SK-N-SH (cell line): ENCODE measurements at regions of chr1 and their contacts with region 1.

Region 1: DNA sequence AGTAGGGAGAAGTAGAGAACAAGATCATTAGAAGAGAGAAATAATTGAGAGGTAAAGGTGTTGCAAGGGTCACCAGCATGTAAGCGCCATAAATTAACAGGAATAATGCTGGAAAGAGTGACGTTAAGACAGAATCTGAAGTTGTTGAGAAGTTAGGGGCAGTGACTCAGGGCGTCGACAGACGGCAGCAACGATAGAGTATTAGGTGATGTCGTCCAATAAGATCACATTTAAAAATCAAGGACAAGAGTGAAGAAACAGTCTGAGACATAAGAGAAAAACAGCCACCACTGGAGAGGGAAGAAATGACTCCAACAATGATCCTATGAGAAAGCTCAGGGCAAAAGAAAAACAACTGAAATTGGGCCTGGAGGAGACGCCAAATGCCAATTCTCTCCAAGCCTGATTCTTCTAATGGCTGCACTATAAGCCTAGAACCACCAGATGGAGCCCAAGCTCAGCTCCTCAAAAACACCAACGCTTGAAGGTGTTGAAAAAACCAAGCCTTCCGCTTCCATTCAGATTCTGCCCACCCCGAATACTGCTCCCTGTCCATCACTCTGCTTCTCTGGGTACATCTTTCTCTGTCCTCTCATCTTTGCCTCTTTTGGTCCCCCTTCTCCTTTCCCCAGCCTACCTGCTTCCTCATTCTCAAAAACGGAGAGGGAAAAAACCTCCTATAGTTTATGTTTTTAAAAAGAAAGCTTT is 70.0 kb downstream of the LUZP1 start:
- DNase-seq: peak; percentile 63
- H3K4me3 ChIP-seq: peak overlapping the region in 1 of 2 experiments; percentile 25; a peak in 1 of 4 replicates
- H3K27ac ChIP-seq: peak overlapping the region in 1 of 2 experiments; percentile 82; a peak in 2 of 4 replicates
- H3K4me1 ChIP-seq: peaks cover 9 to 46% of the 10 kb centered on the region in 2 experiments
- H3K27me3 ChIP-seq: no peaks in the 10 kb centered on the region
- CTCF ChIP-seq: peak; percentile 91
- EP300 ChIP-seq: no peak
- RAD21 ChIP-seq: peak; percentile 97

Region 2: GRCh38 chr1:22976461-22977243 is 122.0 kb before region 1 on chr1:
- CTCF ChIA-PET with region 1: interaction called, 16 read pairs
- POLR2A ChIA-PET with region 1: no interaction called
- DNase-seq: peak; percentile 82
- H3K4me3 ChIP-seq: no peak overlapping the region
- H3K27ac ChIP-seq: no peak overlapping the region
- H3K4me1 ChIP-seq: peaks cover 3 to 13% of the 10 kb centered on the region in 2 experiments; a peak in 2 of 4 replicates
- H3K27me3 ChIP-seq: no peaks in the 10 kb centered on the region
- CTCF ChIP-seq: peak; percentile 88
- EP300 ChIP-seq: no peak
- RAD21 ChIP-seq: peak; percentile 91

Region 3: GRCh38 chr1:23088027-23088426 is 10.6 kb before region 1 on chr1:
- CTCF ChIA-PET with region 1: interaction called, 31 read pairs
- POLR2A ChIA-PET with region 1: no interaction called
- DNase-seq: no peak
- H3K4me3 ChIP-seq: no peak overlapping the region
- H3K27ac ChIP-seq: no peak overlapping the region
- H3K4me1 ChIP-seq: no peaks in the 10 kb centered on the region
- H3K27me3 ChIP-seq: no peaks in the 10 kb centered on the region
- CTCF ChIP-seq: no peak
- EP300 ChIP-seq: no peak
- RAD21 ChIP-seq: no peak

Region 4: DNA sequence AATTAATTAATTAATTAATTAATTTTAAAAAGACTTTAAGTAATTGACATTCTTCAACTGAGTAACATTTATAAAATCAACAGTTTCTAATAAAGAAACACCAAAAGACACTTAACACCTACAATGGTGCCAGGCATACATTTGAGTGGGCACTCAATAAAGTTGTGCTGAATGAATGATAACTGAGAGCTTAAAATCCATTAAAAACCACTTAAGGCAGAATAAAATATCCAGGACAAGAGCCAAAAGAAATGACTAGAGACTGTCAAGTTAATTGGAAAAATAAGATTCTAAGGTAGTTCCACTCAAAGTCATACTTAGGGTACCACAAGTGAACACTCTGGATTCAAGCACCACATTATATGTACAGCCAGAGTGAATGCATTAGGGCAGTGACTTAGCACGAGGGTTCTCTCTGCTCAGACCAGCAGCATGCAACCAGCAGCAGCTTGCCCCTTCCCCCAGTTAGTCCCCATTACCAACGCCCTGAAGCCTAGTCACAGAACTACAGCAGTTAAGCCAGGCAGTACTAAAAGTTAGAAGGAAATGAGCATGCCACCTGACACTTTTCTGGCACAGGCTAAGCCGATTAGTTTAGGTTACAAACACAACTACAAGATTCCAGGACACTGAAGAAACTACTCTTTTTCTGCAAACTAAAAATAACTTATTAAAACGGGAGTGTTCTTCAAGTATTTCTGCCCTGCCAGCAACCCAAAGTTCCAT is 23.6 kb after region 1 on chr1:
- CTCF ChIA-PET with region 1: interaction called, 17 read pairs
- POLR2A ChIA-PET with region 1: no interaction called
- DNase-seq: no peak
- H3K4me3 ChIP-seq: no peak overlapping the region
- H3K27ac ChIP-seq: peak overlapping the region; percentile 47 to 52; a peak in 3 of 4 replicates
- H3K4me1 ChIP-seq: peaks cover 6 to 27% of the 10 kb centered on the region in 2 experiments; a peak in 3 of 4 replicates
- H3K27me3 ChIP-seq: no peaks in the 10 kb centered on the region
- CTCF ChIP-seq: no peak
- EP300 ChIP-seq: no peak
- RAD21 ChIP-seq: no peak

Region 5: DNA sequence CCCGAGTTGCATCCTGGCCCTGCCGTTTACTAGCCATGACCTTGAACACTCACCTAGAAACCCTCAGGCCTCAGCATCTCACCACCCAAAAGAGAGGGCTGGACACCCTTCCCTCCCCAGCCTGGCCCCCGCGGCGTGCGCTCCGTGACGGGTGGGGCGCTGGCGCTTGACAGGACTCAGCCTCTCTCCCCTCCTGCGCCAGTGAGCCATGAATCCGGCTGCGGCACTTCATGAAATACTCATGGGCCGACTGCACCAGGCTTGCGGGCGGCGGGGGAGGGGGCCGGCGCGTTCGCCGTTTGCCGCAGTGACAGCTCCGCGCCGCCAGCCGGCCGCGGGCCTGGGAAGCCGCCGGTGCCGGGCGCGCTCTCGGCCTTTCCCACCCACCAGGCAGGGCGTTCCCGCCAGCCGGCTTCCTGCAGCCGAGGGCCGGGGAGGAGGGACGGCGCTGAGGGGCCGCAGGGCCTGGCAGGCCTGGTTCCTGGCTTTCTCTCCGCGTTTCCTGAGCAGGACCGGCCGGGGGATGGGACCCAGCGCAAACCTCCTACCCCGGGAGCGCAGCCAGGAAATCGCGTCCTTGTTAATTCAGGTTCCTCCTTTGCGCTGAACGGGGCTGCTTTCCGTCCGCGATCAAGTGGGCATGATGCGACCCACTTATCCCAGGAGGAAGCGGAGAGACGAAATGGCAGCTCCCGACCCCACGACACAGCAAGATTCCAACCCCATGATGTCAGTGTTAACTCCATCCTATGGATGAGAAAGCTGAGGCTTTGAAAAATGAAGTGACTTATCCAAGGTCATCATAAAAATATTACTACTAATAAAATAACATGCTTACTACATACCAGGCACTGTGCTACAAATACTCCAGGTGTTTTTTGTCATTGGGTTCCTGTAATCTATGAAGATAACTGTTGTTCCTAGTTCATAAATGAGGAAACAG is 79.1 kb after region 1 on chr1:
- CTCF ChIA-PET with region 1: interaction called, 419 read pairs
- POLR2A ChIA-PET with region 1: no interaction called
- DNase-seq: peak; percentile 95
- H3K4me3 ChIP-seq: peak overlapping the region; percentile 47 to 66
- H3K27ac ChIP-seq: peak overlapping the region; percentile 19 to 81; a peak in 3 of 4 replicates
- H3K4me1 ChIP-seq: peaks cover 0 to 2% of the 10 kb centered on the region in 2 experiments; a peak in 1 of 4 replicates
- H3K27me3 ChIP-seq: no peaks in the 10 kb centered on the region
- CTCF ChIP-seq: no peak; the same call in 1 of the 2 replicates
- EP300 ChIP-seq: no peak
- RAD21 ChIP-seq: no peak

Region 6: DNA sequence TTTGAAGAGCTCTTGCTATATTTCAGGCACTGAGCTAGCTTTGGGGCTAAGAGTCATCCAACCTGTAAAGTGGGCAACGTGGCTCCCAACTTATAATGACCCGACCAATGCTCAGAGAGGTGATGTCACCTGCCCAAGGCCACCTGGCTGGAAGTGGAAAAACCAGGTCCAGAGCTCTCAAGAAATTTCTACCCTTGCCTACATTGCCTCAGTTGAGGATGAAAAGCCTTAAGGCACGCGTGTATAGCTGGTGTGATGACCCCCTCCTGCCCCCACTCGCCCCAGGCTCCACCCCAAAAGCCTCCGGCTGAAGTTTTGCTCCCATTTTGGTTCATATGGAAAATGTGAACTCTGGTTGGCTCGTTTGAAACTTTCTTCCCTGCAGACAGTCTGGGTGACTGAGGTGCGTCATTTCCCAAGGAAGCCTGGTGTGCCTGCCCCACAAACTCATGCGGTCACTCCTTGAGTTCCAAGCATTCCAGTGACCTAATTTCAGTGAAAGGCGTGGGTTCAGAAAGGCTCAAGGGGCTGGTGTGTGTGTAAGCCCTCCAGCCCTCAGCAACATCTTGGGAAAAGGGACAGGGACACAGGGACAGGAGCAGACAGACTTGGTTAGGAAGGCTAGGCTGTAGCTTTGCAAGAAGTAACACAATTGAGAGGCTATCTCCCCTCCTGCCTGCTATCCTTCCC is 98.2 kb after region 1 on chr1:
- CTCF ChIA-PET with region 1: interaction called, 15 read pairs
- POLR2A ChIA-PET with region 1: no interaction called
- DNase-seq: no peak
- H3K4me3 ChIP-seq: no peak overlapping the region
- H3K27ac ChIP-seq: peak overlapping the region in 1 of 2 experiments; percentile 93; a peak in 2 of 4 replicates
- H3K4me1 ChIP-seq: peaks cover 4 to 19% of the 10 kb centered on the region in 2 experiments; a peak in 3 of 4 replicates
- H3K27me3 ChIP-seq: no peaks in the 10 kb centered on the region
- CTCF ChIP-seq: no peak
- EP300 ChIP-seq: peak in 1 of 2 experiments; percentile 61; a peak in 1 of 4 replicates
- RAD21 ChIP-seq: no peak